WTC11 (cell line): ENCODE measurements at regions of chr1 and their contacts with region 1.

Region 1: GRCh38 chr1:101474039-101474665 is 237.3 kb downstream of the S1PR1 start:
- DNase-seq: peak; percentile 21
- ATAC-seq: peak; percentile 92
- H3K4me3 Mint-ChIP-seq: no peak overlapping the region
- H3K27ac Mint-ChIP-seq: no peak overlapping the region
- H3K4me1 Mint-ChIP-seq: no peaks in the 10 kb centered on the region
- H3K27me3 Mint-ChIP-seq: no peaks in the 10 kb centered on the region
- CTCF ChIP-seq: peak; percentile 52; the same call in 1 of the 2 replicates

Region 2: DNA sequence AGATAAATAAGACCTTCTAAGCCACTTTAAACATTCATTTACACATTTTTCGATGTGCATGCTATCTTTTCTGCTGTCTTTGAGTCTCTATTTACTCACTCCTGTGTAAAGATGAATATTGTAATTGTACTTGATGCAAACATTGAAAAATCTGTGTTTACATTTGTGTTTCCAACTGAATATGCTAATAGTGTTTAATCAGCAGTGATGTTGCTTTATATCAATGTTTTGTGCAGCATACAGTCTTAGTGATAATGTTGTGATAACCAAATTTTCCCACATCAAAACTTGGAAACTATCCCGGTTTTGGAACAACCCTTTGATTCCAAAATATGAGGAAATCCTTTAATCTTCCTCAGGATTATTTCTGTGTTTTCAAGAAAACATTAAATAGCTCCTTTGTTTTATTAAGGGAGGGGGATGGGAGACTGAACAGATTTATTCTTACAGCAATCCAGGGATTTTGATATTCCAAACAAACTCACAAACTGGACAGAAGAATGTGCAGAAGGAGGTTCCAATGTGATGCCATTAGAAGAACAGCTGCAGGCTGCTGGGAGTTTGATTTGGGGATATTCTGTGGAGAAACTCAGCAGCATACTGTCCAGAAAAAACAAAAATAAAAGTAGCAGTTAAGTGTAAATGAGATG is 10.7 kb after region 1 on chr1:
- CTCF ChIA-PET with region 1: interaction called, 15 read pairs
- POLR2A ChIA-PET with region 1: no interaction called
- DNase-seq: no peak
- ATAC-seq: no peak
- H3K4me3 Mint-ChIP-seq: no peak overlapping the region
- H3K27ac Mint-ChIP-seq: no peak overlapping the region
- H3K4me1 Mint-ChIP-seq: peaks cover 11% of the 10 kb centered on the region
- H3K27me3 Mint-ChIP-seq: peaks cover 20% of the 10 kb centered on the region
- CTCF ChIP-seq: no peak